ENCODE measurements at regions of chr12 and their contacts with region 1.

Region 1: GRCh38 chr12:54324617-54325441 is at the start of gene COPZ1:
- DNase-seq: peak; percentile 99
- ATAC-seq: peak; percentile 97
- H3K4me3 ChIP-seq: peak within 1 kb of the TSS; percentile 93 to 98
- H3K27ac ChIP-seq: peak within 1 kb of the TSS; percentile 94
- H3K4me1 ChIP-seq: peaks cover 18% of the 10 kb centered on the region
- H3K27me3 ChIP-seq: no peaks in the 10 kb centered on the region
- CTCF ChIP-seq: peak; percentile 94
- total RNA-seq, gene COPZ1: 175 TPM

Region 2: GRCh38 chr12:53014709-53015108 is 1310.1 kb before region 1 on chr12:
- CTCF ChIA-PET with region 1: no interaction called
- POLR2A ChIA-PET with region 1: no interaction called
- in situ Hi-C with region 1: no loop called
- intact Hi-C with region 1: no loop called
- DNase-seq: no peak
- ATAC-seq: no peak
- H3K4me3 ChIP-seq: no peak overlapping the region
- H3K27ac ChIP-seq: peak overlapping the region; percentile 6; the same call in 1 of the 2 replicates
- H3K4me1 ChIP-seq: peaks cover 22% of the 10 kb centered on the region
- H3K27me3 ChIP-seq: no peaks in the 10 kb centered on the region
- CTCF ChIP-seq: no peak

Region 3: GRCh38 chr12:54214553-54215406 is 110.0 kb before region 1 on chr12:
- CTCF ChIA-PET with region 1: interaction called, 13 read pairs
- POLR2A ChIA-PET with region 1: interaction called, 21 read pairs
- in situ Hi-C with region 1: no loop called
- intact Hi-C with region 1: no loop called
- DNase-seq: peak; percentile 64
- ATAC-seq: peak; percentile 86
- H3K4me3 ChIP-seq: peak overlapping the region; percentile 20 to 60; a peak in 3 of 4 replicates
- H3K27ac ChIP-seq: no peak overlapping the region; the same call in 1 of the 2 replicates
- H3K4me1 ChIP-seq: peaks cover 12% of the 10 kb centered on the region; the same call in 1 of the 2 replicates
- H3K27me3 ChIP-seq: no peaks in the 10 kb centered on the region
- CTCF ChIP-seq: peak; percentile 100

Region 4: DNA sequence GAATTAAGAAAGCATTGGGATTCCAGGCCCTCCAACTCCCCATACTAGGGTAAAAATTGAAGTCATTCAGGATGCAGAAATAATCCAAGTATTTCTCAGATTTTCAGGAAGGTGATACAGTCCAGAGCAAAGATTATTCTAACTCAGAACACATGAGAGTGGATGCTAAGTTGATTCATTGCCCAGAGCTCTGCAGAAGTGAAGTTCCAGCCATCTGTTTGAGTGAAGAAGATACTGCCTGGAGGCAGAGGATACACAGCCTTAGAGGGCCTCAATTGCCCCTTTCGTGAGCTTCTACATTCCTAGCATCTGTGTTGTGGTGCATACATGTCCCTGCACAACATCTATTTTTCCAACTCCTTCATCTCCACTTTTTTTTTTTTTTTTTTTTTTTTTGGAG is 99.2 kb before region 1 on chr12:
- CTCF ChIA-PET with region 1: interaction called, 10 read pairs
- POLR2A ChIA-PET with region 1: no interaction called
- in situ Hi-C with region 1: no loop called
- intact Hi-C with region 1: no loop called
- DNase-seq: no peak
- ATAC-seq: no peak
- H3K4me3 ChIP-seq: no peak overlapping the region
- H3K27ac ChIP-seq: no peak overlapping the region
- H3K4me1 ChIP-seq: peaks cover 12% of the 10 kb centered on the region
- H3K27me3 ChIP-seq: no peaks in the 10 kb centered on the region
- CTCF ChIP-seq: no peak

Region 5: GRCh38 chr12:54279866-54280467 is 44.9 kb before region 1 on chr12 and contains the start of gene CBX5:
- CTCF ChIA-PET with region 1: interaction called, 19 read pairs
- POLR2A ChIA-PET with region 1: interaction called, 10 read pairs
- in situ Hi-C with region 1: no loop called
- intact Hi-C with region 1: no loop called
- DNase-seq: no peak
- ATAC-seq: peak; percentile 72
- H3K4me3 ChIP-seq: peak within 1 kb of the TSS; percentile 93 to 99
- H3K27ac ChIP-seq: peak within 1 kb of the TSS; percentile 100
- H3K4me1 ChIP-seq: peaks cover 28% of the 10 kb centered on the region
- H3K27me3 ChIP-seq: no peaks in the 10 kb centered on the region
- CTCF ChIP-seq: no peak
- total RNA-seq, gene CBX5: 130 TPM

Region 6: DNA sequence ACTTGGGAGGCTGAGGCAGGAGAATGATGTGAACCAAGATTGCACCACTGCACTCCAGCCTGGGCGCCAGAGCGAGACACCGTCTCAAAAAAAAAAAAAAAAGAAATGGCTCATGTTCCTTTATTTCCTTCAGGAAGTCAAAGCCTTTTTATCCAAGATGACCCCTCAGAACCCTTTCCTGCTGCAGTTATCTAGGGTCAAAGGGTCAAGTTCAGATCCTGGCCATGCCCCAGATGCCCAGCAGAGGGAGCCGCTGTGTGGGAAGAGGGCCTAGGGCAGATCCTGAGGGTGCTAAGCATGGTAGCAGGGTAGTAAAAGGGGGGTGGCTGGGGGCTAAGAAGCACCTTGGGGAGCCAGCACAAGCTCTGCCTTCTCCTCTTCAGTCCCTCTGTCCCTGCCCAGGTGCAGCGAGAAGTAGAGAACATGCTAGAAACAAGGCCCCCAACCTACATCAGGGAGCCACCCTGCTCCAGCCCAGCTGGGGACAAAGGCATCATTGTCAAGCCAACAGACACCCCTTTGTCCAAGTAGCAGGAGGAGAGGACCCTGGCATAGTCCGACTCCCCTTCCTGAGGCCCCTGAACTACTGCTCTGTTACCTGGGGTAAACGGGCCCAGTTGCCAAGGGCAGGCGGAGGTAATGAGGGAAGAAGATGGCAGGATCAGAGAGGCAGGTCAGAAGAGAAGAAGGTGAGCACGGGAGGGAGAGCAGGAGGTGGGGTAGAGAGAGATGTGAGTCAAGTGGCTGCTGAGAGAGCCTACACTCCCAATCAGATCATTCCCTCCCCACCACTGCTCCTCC is 30.5 kb before region 1 on chr12:
- CTCF ChIA-PET with region 1: interaction called, 23 read pairs
- POLR2A ChIA-PET with region 1: interaction called, 9 read pairs
- in situ Hi-C with region 1: no loop called
- intact Hi-C with region 1: loop called (anchors 2 kb)
- DNase-seq: no peak
- ATAC-seq: peak; percentile 32
- H3K4me3 ChIP-seq: no peak overlapping the region
- H3K27ac ChIP-seq: no peak overlapping the region
- H3K4me1 ChIP-seq: no peaks in the 10 kb centered on the region
- H3K27me3 ChIP-seq: peaks cover 3% of the 10 kb centered on the region; the same call in 1 of the 2 replicates
- CTCF ChIP-seq: peak; percentile 89